ENCODE measurements at regions of chrX and their contacts with region 1.

Region 1: DNA sequence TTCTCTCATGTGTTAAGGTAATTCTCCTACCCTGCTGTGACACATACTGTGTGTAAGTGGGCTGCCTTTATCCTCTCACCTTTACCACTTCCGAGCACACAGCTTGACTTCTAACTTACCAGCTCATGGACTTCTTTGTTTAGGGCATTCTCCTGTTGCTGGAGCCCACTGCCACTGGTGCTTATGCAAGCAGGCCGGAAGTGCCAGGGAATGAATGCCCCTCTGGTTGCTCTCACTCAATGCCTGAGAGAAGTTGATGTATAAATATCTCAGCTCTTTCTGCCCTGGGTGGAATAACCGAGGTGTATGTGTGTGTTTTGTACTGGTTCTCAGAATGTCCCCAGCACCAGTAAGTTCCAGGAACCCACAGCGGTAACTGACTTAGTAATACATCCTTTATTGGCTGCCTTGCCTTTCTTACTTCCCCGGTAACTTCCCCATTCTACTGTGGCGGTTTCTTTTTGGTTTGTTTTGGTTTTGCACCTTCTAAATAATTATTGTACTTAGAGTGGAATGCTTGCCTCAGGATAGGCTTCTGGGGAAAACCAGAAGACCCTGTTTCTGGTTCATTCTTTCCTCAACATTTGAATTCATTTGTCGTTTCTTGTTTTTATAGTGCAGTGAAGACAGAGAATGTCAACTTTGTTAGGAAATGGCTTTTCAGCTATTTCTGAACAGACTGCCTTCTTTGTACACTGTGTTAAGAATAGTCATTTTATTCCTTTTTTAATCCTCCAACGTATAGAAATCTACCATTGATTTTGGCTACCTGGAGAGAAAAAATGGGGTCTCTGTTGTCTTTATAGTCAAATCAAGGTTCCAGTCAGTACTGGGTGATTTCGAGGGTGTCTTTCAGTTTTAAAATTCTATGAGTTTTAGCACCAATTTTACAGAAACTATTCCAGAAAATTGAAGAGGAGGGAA is 45.4 kb downstream of the CXorf58 start:
- DNase-seq: peak; percentile 2 to 64 (median 21)
- ATAC-seq: peak; percentile 90 to 91
- H3K4me3 Mint-ChIP-seq: peak overlapping the region; percentile 81 to 92 (median 87)
- H3K27ac Mint-ChIP-seq: peak overlapping the region; percentile 86 to 98 (median 92)
- H3K4me1 Mint-ChIP-seq: peaks cover 3 to 30% (median 20%) of the 10 kb centered on the region in 4 donors
- H3K27me3 Mint-ChIP-seq: no peaks in the 10 kb centered on the region

Region 2: DNA sequence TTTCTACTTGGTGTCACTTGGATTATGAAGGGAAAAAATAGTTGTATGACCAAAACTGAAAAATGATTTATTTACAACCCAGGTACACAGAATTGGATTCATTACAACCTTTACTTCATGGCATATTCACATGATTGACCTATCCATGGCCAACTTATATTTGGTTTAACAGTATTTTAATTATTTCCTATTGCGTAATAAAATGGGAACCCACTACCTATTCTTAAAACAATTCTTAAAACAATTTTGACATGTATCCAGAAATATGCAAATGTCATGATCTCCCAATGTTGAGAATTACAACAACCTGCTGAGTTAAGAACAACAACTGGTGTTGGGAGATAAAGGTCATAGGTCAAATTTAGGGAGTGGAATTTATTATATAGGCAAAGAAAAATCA is 1008.3 kb before region 1 on chrX:
- POLR2A ChIA-PET with region 1: no interaction called
- DNase-seq: no peak
- ATAC-seq: no peak
- H3K4me3 Mint-ChIP-seq: no peak overlapping the region
- H3K27ac Mint-ChIP-seq: no peak overlapping the region
- H3K4me1 Mint-ChIP-seq: no peaks in the 10 kb centered on the region
- H3K27me3 Mint-ChIP-seq: peaks cover 0 to 4% (median 0%) of the 10 kb centered on the region in 5 donors

Region 3: GRCh38 chrX:24014388-24015018 is 61.3 kb after region 1 on chrX:
- POLR2A ChIA-PET with region 1: no interaction called
- DNase-seq: peak in 4 of 10 donors; percentile 15 to 44 (median 36)
- ATAC-seq: peak; percentile 81 to 82
- H3K4me3 Mint-ChIP-seq: peak overlapping the region; percentile 62 to 85 (median 78)
- H3K27ac Mint-ChIP-seq: peak overlapping the region; percentile 73 to 98 (median 91)
- H3K4me1 Mint-ChIP-seq: peaks cover 18 to 38% (median 31%) of the 10 kb centered on the region in 4 donors
- H3K27me3 Mint-ChIP-seq: no peaks in the 10 kb centered on the region

Region 4: GRCh38 chrX:24024819-24025740 is 71.8 kb after region 1 on chrX:
- POLR2A ChIA-PET with region 1: interaction called, 15 read pairs
- DNase-seq: peak; percentile 70 to 84 (median 78)
- ATAC-seq: peak; percentile 86 to 88
- H3K4me3 Mint-ChIP-seq: peak overlapping the region; percentile 75 to 94 (median 88)
- H3K27ac Mint-ChIP-seq: peak overlapping the region in 8 of 10 donors; percentile 48 to 91 (median 80)
- H3K4me1 Mint-ChIP-seq: peaks cover 11 to 33% (median 21%) of the 10 kb centered on the region in 4 donors
- H3K27me3 Mint-ChIP-seq: no peaks in the 10 kb centered on the region